ENCODE measurements at regions of chr5 and their contacts with region 1.

Region 1: DNA sequence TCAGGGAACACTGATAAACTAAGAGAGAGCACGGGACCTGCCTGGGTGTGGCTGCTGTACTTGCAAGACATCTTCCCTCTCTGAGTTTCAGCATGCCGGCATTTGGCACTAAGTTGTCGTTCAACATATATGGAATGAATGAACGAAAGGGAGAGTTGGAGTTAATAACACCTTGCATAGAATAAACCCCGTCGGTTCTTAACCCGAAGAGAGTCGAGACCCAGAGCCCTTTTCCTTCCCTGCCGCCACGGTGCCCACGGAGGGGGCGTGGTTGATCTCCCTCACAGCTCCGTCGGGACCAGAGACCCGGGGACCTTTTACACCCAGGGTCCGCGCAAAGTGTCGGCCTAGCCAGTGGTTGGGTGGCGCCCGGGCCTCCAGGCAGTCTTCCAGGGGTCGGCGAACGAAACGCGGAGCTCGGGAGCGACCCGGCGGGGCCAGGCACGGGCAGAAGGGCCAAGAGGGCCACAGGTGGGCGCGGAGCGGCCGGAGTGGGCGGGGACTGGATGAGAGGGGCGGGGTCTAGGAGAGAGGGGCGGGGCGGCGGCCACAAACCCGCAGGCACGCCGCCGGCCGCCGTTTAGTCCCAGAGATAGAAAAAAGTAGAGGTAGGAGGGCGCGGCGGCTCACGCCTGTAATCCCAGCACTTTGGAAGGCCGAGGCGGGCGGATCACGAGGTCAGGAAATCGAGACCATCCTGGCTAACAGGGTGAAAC is 735 bp upstream of the RPL26L1 start:
- DNase-seq: peak; percentile 78
- H3K4me3 ChIP-seq: peak overlapping the region; percentile 53 to 99 (median 67)
- H3K27ac ChIP-seq: peak overlapping the region; percentile 84 to 90 (median 86)
- H3K4me1 ChIP-seq: peaks cover 7 to 19% (median 14%) of the 10 kb centered on the region in 4 donors
- H3K27me3 ChIP-seq: no peaks in the 10 kb centered on the region
- CTCF ChIP-seq: no peak
- EP300 ChIP-seq: no peak
- POLR2A ChIP-seq: no peak

Region 2: GRCh38 chr5:172463031-172463430 is 495.5 kb before region 1 on chr5:
- in situ Hi-C with region 1: loop called in 1 of 4 experiments (anchors 10 kb)
- intact Hi-C with region 1: no loop called
- DNase-seq: no peak
- H3K4me3 ChIP-seq: no peak overlapping the region
- H3K27ac ChIP-seq: no peak overlapping the region
- H3K4me1 ChIP-seq: no peaks in the 10 kb centered on the region
- H3K27me3 ChIP-seq: no peaks in the 10 kb centered on the region
- CTCF ChIP-seq: no peak
- EP300 ChIP-seq: no peak
- POLR2A ChIP-seq: no peak

Measured in transverse colon (tissue), 4 donors.